Esophagus muscularis mucosa (tissue), 4 donors: ENCODE measurements at regions of chr9 and their contacts with region 1.

Region 1: DNA sequence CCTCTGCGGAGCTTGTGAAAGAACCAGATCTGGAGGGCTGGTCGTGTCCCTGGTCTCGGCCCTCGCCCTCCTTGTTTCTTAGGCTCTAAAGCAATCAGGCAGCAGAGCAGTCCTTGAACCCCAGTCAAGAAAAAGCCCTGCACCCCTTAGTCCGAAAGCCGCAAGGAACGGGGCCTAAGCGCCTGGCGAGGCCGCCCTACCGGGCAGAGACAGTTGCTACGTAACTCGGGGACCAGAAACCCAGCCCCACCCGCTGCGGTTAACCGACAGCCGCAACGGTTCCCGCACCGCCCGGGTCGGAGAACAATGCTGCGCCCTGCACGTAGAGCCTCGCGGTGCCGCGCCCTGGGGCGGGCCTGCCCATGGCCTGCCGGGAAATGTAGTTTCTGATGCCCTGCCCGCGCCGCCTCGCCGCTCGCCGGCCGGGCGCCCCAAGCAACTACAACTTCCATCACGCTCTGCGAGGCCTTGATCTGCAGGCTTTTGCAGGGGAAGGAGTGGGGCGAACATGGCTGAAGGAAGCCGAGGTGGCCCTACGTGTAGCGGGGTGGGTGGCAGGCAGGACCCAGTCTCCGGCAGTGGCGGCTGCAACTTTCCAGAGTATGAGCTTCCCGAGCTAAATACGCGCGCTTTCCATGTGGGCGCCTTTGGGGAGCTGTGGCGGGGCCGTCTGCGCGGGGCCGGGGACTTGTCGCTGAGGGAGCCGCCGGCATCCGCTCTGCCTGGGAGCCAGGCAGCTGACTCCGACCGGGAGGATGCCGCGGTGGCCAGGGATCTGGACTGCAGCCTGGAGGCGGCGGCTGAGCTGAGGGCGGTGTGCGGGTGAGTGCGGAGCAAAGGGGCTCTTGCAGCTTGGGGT is at the start of gene SNAPC3:
- DNase-seq: peak; percentile 97
- H3K4me3 ChIP-seq: peak within 1 kb of the TSS; percentile 79 to 93 (median 88)
- H3K27ac ChIP-seq: peak within 1 kb of the TSS; percentile 90 to 94 (median 92)
- H3K4me1 ChIP-seq: peaks cover 30 to 43% (median 43%) of the 10 kb centered on the region in 4 donors
- H3K27me3 ChIP-seq: no peaks in the 10 kb centered on the region
- CTCF ChIP-seq: peak in 1 of 3 experiments; percentile 13
- EP300 ChIP-seq: peak; percentile 80
- POLR2A ChIP-seq: peak; percentile 27
- total RNA-seq, gene SNAPC3: 26.3 to 38.8 (median 34.6) TPM

Region 2: DNA sequence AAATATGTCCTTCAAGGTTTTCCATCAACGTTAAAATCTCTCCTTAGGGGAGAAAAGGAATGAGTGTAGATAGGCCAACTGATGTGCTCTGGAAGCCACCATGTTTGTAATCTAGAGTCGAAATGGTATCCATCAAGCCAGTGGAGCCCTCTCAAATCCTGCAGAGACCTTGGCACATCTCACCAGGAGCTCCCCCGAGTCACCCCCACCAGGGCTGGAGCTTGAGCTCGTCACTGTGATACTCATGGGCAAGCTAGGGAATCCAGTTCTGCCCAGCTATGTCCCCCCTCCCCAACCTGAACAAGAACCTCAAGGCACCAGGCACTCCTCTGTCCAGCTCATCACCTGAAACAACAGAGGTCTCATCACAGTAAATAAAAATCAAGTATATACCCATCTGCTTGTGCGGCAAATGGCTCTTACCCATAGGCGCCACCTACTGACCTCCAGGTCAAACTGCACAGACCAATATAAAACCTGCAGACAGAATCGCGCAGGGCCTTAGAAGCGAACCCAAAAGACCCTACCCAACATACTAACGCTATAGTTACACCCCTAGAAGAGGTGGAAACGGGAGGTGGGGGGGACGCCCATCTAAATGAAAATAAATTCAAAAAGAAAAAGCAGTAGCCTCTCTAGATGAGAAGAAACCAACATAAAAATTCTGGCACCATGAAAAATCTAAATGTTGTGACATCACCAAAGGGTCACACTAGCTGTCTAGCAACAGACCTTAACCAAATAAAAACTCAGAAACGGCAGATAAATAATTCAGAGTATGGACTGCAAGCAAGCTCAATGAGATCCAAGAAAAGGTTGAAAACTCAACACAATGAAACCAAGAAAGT is 190.6 kb before region 1 on chr9:
- intact Hi-C with region 1: no loop called
- DNase-seq: no peak
- H3K4me3 ChIP-seq: no peak overlapping the region
- H3K27ac ChIP-seq: no peak overlapping the region
- H3K4me1 ChIP-seq: peaks cover 0 to 3% (median 0%) of the 10 kb centered on the region in 4 donors
- H3K27me3 ChIP-seq: no peaks in the 10 kb centered on the region
- CTCF ChIP-seq: peak in 1 of 3 experiments; percentile 45
- EP300 ChIP-seq: no peak
- POLR2A ChIP-seq: no peak

Region 3: DNA sequence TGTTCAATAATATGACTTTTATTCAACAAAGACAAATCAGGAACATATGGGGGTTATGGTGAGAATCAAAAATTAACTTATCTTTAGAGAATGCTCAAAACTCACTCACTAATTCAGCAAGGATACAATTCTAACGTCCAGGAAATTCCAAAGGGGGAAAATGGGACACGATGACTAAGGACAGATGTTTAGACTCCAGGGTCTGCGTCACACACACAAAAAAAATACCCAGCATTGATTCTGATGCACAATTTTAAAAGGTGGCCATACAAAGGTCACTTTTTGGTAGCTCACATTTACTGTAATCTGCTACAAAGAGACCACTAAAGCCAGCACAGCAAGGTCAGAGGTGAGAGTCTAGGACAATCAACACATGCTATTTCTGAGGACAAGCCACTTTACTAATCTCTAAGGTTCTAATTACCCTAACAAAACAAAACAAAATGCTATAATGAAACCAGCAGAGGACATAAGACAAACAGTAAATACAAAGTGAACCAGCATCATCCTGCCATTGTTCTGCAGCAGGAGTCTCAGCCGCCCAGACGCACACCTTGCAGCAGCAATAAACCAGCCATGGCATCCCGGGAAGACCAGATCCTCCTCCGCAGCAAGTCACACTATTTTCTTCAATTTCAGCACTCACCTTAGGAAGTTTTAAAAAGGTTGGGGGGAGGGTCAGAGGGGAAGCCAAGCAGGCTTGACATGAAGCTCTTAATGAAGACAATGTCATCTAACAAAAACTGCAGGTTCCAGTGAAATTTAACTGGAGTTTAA is 173.4 kb before region 1 on chr9:
- intact Hi-C with region 1: no loop called
- DNase-seq: no peak
- H3K4me3 ChIP-seq: no peak overlapping the region
- H3K27ac ChIP-seq: peak overlapping the region in 3 of 4 donors; percentile 1 to 9 (median 3)
- H3K4me1 ChIP-seq: peaks cover 0 to 24% (median 20%) of the 10 kb centered on the region in 4 donors
- H3K27me3 ChIP-seq: no peaks in the 10 kb centered on the region
- CTCF ChIP-seq: no peak
- EP300 ChIP-seq: no peak
- POLR2A ChIP-seq: no peak

Region 4: DNA sequence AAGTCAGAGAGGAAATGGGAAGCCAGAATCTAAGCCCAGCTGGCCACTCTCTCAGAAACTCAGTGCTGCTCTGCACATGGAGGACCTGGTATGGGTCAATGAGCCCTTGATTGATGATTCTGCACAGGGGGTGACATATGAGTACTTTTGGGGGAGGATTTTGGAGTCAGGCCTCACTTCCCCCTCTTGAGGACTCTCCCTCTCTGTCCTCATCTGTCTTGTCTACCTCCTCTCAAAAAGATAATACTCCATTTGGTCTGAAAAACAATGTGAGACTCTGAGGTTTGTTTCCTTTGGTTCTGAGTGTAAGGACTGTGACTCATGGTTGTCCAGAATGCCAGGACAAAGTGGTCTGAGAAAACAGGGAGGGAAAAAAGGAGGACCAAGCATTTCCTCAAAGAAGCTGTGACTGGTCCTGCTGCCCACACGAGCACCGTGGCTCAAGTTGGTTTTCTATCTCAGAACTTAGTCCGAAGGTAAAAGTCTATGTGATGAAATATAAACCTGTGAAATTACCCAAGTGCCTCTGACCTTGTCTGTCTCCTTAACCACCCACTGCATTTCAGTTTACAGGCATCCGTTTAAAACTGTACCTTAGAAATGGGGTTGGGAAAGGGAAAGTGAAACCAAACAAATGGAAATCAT is 126.7 kb before region 1 on chr9:
- intact Hi-C with region 1: loop called (anchors 5 kb)
- DNase-seq: no peak
- H3K4me3 ChIP-seq: peak overlapping the region; percentile 36 to 62 (median 54)
- H3K27ac ChIP-seq: peak overlapping the region; percentile 78 to 86 (median 83)
- H3K4me1 ChIP-seq: peaks cover 18 to 57% (median 48%) of the 10 kb centered on the region in 4 donors
- H3K27me3 ChIP-seq: no peaks in the 10 kb centered on the region
- CTCF ChIP-seq: no peak
- EP300 ChIP-seq: no peak
- POLR2A ChIP-seq: no peak

Region 5: GRCh38 chr9:15469862-15470261 is 47.3 kb after region 1 on chr9:
- intact Hi-C with region 1: loop called (anchors 10 kb)
- DNase-seq: no peak
- H3K4me3 ChIP-seq: no peak overlapping the region
- H3K27ac ChIP-seq: no peak overlapping the region
- H3K4me1 ChIP-seq: peaks cover 0 to 30% (median 17%) of the 10 kb centered on the region in 4 donors
- H3K27me3 ChIP-seq: no peaks in the 10 kb centered on the region
- CTCF ChIP-seq: no peak
- EP300 ChIP-seq: no peak
- POLR2A ChIP-seq: no peak

Region 6: GRCh38 chr9:15552636-15553527 is 130.3 kb after region 1 on chr9 and contains the start of gene CCDC171:
- intact Hi-C with region 1: loop called (anchors 5 kb)
- DNase-seq: peak; percentile 97
- H3K4me3 ChIP-seq: peak within 1 kb of the TSS; percentile 69 to 86 (median 76)
- H3K27ac ChIP-seq: peak within 1 kb of the TSS; percentile 80 to 94 (median 89)
- H3K4me1 ChIP-seq: peaks cover 7 to 14% (median 11%) of the 10 kb centered on the region in 4 donors
- H3K27me3 ChIP-seq: no peaks in the 10 kb centered on the region
- CTCF ChIP-seq: no peak
- EP300 ChIP-seq: no peak
- POLR2A ChIP-seq: peak; percentile 12
- total RNA-seq, gene CCDC171: 1.3 to 1.7 (median 1.4) TPM

Region 7: DNA sequence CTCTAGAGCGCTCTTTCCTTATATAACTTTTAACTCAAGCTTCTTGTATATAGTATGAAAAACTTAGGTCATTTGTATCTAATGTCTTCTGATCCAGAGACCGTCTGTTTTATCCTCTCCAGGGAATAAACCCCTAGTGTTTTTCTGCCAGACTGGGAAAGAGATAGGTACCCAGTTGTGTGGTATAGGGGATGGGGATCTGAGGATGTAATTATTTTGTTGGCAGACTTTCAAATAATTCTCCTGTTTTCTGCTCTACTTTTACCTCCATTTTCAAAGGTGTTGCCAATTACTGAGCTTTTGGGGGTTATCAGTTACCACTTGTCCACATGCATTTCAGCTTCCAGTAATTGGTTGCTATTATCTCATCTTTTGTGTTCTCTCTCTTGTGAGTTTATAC is 148.2 kb after region 1 on chr9:
- intact Hi-C with region 1: no loop called
- DNase-seq: no peak
- H3K4me3 ChIP-seq: no peak overlapping the region
- H3K27ac ChIP-seq: no peak overlapping the region
- H3K4me1 ChIP-seq: no peaks in the 10 kb centered on the region
- H3K27me3 ChIP-seq: no peaks in the 10 kb centered on the region
- CTCF ChIP-seq: no peak
- EP300 ChIP-seq: no peak
- POLR2A ChIP-seq: no peak

Region 8: GRCh38 chr9:16028548-16028947 is 605.9 kb after region 1 on chr9:
- intact Hi-C with region 1: no loop called
- DNase-seq: no peak
- H3K4me3 ChIP-seq: no peak overlapping the region
- H3K27ac ChIP-seq: no peak overlapping the region
- H3K4me1 ChIP-seq: peaks cover 0 to 31% (median 20%) of the 10 kb centered on the region in 4 donors
- H3K27me3 ChIP-seq: no peaks in the 10 kb centered on the region
- CTCF ChIP-seq: no peak
- EP300 ChIP-seq: no peak
- POLR2A ChIP-seq: no peak